MCF 10A (cell line): ENCODE measurements at regions of chr5 and their contacts with region 1.

Region 1: GRCh38 chr5:94161801-94162200 is 420.4 kb upstream of the POU5F2 start:
- DNase-seq: no peak
- H3K4me3 Mint-ChIP-seq: no peak overlapping the region
- H3K27ac Mint-ChIP-seq: no peak overlapping the region
- H3K4me1 Mint-ChIP-seq: no peaks in the 10 kb centered on the region
- H3K27me3 Mint-ChIP-seq: no peaks in the 10 kb centered on the region
- CTCF ChIP-seq: no peak

Region 2: GRCh38 chr5:93967923-93968322 is 193.9 kb before region 1 on chr5:
- CTCF ChIA-PET with region 1: no interaction called
- POLR2A ChIA-PET with region 1: no interaction called
- intact Hi-C with region 1: loop called (anchors 2 kb)
- DNase-seq: no peak
- H3K4me3 Mint-ChIP-seq: no peak overlapping the region
- H3K27ac Mint-ChIP-seq: no peak overlapping the region
- H3K4me1 Mint-ChIP-seq: no peaks in the 10 kb centered on the region
- H3K27me3 Mint-ChIP-seq: no peaks in the 10 kb centered on the region
- CTCF ChIP-seq: no peak